ENCODE measurements at regions of chr19 and their contacts with region 1.

Region 1: DNA sequence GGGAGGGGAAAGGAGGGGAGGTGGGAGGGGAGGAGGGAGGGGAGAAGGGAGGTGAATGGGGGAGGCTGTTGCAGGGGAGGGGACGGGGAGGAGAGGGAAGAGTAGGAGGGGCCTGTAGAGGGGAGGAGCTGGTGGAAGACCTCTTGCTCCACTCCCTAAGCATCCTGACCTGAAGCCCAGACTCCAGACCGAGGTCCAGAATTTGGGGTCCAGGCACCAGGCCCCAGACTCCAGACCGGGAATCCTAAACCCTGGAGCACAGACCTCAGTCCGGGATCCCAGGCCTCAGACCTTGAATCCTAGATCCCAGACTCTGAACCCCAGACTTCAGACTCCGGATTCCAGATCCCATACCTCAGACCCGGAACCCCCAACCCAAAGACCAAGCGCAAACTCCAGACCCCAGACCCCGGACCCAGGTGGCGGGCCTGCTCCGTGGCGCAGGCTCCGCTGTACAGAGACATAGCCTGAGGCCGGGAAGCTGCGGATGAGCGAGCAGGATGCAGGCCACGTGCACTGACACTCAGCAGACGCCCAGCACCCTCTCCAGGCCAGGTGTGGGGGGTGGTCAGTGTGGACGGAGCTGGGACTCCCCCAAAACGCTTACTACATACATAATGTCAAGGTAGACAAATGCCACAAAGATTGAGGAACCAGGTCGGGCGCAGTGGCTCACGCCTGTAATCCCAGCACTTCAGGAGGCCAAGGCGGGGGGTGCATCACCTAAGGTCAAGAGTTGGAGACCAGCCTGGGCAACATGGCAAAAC is 710 bp upstream of the BTBD2 start:
- DNase-seq: peak; percentile 82
- H3K4me3 Mint-ChIP-seq: peak overlapping the region; percentile 60
- H3K27ac Mint-ChIP-seq: peak overlapping the region; percentile 28
- H3K4me1 Mint-ChIP-seq: peaks cover 15% of the 10 kb centered on the region
- H3K27me3 Mint-ChIP-seq: no peaks in the 10 kb centered on the region

Region 2: GRCh38 chr19:1929021-1929742 is 87.0 kb before region 1 on chr19:
- CTCF ChIA-PET with region 1: no interaction called
- POLR2A ChIA-PET with region 1: interaction called, 3 read pairs
- intact Hi-C with region 1: loop called (anchors 5 kb)
- DNase-seq: peak; percentile 84
- H3K4me3 Mint-ChIP-seq: peak overlapping the region; percentile 68
- H3K27ac Mint-ChIP-seq: no peak overlapping the region
- H3K4me1 Mint-ChIP-seq: peaks cover 16% of the 10 kb centered on the region
- H3K27me3 Mint-ChIP-seq: no peaks in the 10 kb centered on the region

Region 3: DNA sequence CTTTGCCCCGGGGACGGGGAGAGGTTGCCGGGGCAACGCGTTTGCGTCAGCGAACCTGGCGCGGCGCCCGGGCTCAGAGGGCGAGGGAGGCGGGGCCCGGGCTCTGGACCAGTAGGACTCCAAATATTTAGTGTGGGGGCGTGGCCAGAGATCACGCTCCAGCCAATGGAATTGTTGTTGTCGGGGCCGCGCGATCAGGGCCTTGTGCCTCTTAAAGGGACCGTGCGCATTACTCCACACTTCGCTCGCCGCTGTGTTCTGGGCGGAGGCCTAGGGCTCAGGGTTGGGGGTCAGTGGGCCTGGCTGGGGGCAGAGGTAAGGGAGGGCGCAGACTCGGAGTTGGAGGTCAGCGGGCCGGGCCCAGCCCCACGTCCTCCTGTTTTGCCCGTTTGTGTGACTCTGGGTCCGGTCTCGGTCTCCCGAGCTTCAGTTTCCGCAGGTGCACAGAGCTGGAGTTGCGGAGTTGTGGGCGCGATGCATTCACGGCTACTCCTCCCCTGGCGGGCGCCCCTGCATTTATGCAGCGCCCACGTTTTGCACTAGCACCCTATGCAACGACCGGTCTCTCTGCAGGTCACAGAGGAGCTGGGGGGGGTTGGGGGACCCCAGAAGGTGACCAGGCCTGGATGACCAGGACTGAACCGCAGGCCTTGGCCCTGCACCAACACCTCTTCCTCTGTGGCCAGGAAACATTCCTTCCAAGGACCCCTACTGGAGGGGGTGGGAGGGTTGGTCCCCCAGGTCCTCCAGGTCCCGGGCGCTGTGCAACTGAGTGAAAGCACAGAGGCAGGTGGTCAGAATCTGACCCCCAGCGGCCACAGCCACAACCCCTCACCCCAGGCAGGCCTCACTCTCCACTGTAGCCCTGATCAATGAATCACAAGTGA is 45.5 kb after region 1 on chr19:
- CTCF ChIA-PET with region 1: interaction called, 8 read pairs
- POLR2A ChIA-PET with region 1: no interaction called
- intact Hi-C with region 1: loop called (anchors 2 kb)
- DNase-seq: peak; percentile 99
- H3K4me3 Mint-ChIP-seq: peak overlapping the region; percentile 86
- H3K27ac Mint-ChIP-seq: peak overlapping the region; percentile 91
- H3K4me1 Mint-ChIP-seq: peaks cover 27% of the 10 kb centered on the region
- H3K27me3 Mint-ChIP-seq: no peaks in the 10 kb centered on the region

Region 4: GRCh38 chr19:2070436-2070827 is 54.2 kb after region 1 on chr19:
- CTCF ChIA-PET with region 1: interaction called, 16 read pairs
- POLR2A ChIA-PET with region 1: no interaction called
- intact Hi-C with region 1: loop called (anchors 1 kb)
- DNase-seq: no peak
- H3K4me3 Mint-ChIP-seq: no peak overlapping the region
- H3K27ac Mint-ChIP-seq: no peak overlapping the region
- H3K4me1 Mint-ChIP-seq: peaks cover 12% of the 10 kb centered on the region
- H3K27me3 Mint-ChIP-seq: no peaks in the 10 kb centered on the region

Region 5: GRCh38 chr19:2084993-2085720 is 68.9 kb after region 1 on chr19:
- CTCF ChIA-PET with region 1: interaction called, 7 read pairs
- POLR2A ChIA-PET with region 1: no interaction called
- intact Hi-C with region 1: loop called (anchors 5 kb)
- DNase-seq: peak; percentile 97
- H3K4me3 Mint-ChIP-seq: peak overlapping the region; percentile 99
- H3K27ac Mint-ChIP-seq: peak overlapping the region; percentile 99
- H3K4me1 Mint-ChIP-seq: peaks cover 59% of the 10 kb centered on the region
- H3K27me3 Mint-ChIP-seq: no peaks in the 10 kb centered on the region

Region 6: GRCh38 chr19:2113439-2114211 is 97.4 kb after region 1 on chr19:
- CTCF ChIA-PET with region 1: interaction called, 10 read pairs
- POLR2A ChIA-PET with region 1: no interaction called
- intact Hi-C with region 1: no loop called
- DNase-seq: no peak
- H3K4me3 Mint-ChIP-seq: no peak overlapping the region
- H3K27ac Mint-ChIP-seq: no peak overlapping the region
- H3K4me1 Mint-ChIP-seq: peaks cover 5% of the 10 kb centered on the region
- H3K27me3 Mint-ChIP-seq: no peaks in the 10 kb centered on the region